ENCODE measurements at regions of chr4 and their contacts with region 1.

Region 1: GRCh38 chr4:110516106-110516922 is 40.4 kb downstream of the ENPEP start:
- DNase-seq: peak; percentile 60
- H3K4me3 Mint-ChIP-seq: peak overlapping the region; percentile 83
- H3K27ac Mint-ChIP-seq: peak overlapping the region; percentile 46
- H3K4me1 Mint-ChIP-seq: peaks cover 23% of the 10 kb centered on the region
- H3K27me3 Mint-ChIP-seq: peaks cover 10% of the 10 kb centered on the region

Region 2: GRCh38 chr4:109424093-109424841 is 1092.0 kb before region 1 on chr4:
- intact Hi-C with region 1: loop called (anchors 2 kb)
- DNase-seq: no peak
- H3K4me3 Mint-ChIP-seq: no peak overlapping the region
- H3K27ac Mint-ChIP-seq: no peak overlapping the region
- H3K4me1 Mint-ChIP-seq: peaks cover 9% of the 10 kb centered on the region
- H3K27me3 Mint-ChIP-seq: peaks cover 9% of the 10 kb centered on the region

Region 3: DNA sequence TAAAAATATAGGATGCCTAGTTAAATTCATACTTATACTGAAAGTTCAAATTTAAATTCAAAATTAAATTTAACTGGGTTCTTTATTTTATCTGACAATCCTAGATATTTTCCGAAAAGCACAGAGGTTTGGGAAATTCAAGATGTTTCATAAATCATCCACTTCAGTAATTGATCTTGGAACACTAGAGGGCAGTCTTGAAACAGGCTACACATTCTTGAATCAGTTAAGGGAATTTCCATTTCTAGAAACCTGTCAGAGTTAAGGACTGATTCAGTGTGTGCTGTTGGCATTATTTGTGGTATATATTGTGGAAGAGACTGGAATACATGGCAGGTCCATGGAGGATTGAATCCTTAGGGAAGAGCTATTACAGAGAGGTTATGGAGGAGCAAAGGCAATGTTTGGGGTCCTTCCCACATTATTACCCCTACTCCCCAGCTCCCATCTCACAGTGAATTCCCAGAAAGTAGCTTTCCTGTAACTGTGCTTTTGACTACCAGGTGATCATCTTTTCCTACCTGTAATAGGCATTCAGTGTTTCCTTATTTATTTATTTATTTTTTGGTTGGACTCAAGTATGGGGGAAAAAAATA is 510.8 kb before region 1 on chr4:
- intact Hi-C with region 1: loop called (anchors 1 kb)
- DNase-seq: no peak
- H3K4me3 Mint-ChIP-seq: no peak overlapping the region
- H3K27ac Mint-ChIP-seq: no peak overlapping the region
- H3K4me1 Mint-ChIP-seq: peaks cover 23% of the 10 kb centered on the region
- H3K27me3 Mint-ChIP-seq: peaks cover 2% of the 10 kb centered on the region

Region 4: DNA sequence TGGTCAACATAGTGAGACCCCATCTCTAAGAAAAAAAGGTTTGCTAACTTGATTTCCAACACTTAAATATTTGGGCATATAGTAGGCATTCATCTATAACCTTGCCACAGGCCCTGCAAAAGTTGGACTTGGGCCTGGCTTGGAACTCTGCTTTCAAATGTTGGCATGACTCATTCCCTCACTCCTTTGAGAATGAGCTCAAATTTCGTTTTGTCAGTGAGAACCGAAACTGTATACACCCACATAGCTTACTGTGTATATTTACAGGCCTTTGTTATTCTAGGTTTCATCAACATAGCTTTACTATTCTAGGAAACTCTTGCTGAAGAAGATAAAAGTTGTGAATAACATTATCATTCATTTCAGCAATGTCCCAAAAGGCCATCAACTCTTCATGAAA is 229.2 kb before region 1 on chr4:
- intact Hi-C with region 1: loop called (anchors 10 kb)
- DNase-seq: no peak
- H3K4me3 Mint-ChIP-seq: peak overlapping the region; percentile 31
- H3K27ac Mint-ChIP-seq: peak overlapping the region; percentile 74
- H3K4me1 Mint-ChIP-seq: peaks cover 15% of the 10 kb centered on the region
- H3K27me3 Mint-ChIP-seq: peaks cover 13% of the 10 kb centered on the region

Region 5: GRCh38 chr4:110344162-110344561 is 172.2 kb before region 1 on chr4:
- intact Hi-C with region 1: loop called (anchors 2 kb)
- DNase-seq: no peak
- H3K4me3 Mint-ChIP-seq: no peak overlapping the region
- H3K27ac Mint-ChIP-seq: no peak overlapping the region
- H3K4me1 Mint-ChIP-seq: peaks cover 7% of the 10 kb centered on the region
- H3K27me3 Mint-ChIP-seq: peaks cover 14% of the 10 kb centered on the region

Region 6: DNA sequence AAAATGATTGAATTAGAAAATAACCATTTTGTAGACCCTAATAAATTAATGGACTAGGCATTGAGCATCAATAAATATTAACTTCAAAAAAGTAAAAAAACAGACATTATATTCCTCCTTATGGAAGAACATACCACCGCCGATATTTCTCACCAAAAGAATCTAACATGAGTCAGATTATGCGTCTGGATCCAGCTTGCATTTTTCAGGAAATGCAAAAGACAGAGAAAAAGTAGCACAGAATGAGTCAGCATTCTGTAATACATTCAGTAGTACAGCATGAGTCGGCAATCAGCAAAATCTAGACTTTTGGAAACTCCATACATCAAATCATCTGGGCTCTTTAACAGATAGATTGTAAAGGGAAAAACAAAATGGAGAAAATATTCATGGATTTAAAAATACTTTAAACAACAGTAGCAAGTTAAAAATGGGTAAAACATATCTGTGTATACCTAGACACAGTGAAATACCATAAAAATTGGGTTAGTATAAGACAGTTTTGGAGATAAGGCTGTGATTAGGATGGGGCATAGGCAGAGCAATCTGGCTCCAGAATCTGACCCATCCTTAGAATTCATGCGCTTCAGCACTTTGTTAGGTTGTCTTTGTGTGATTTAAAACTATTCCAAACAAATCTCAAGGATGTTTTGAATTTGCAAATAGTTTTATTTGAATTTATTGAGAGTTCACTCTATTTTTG is 995.9 kb after region 1 on chr4:
- intact Hi-C with region 1: no loop called
- DNase-seq: no peak
- H3K4me3 Mint-ChIP-seq: no peak overlapping the region
- H3K27ac Mint-ChIP-seq: no peak overlapping the region
- H3K4me1 Mint-ChIP-seq: no peaks in the 10 kb centered on the region
- H3K27me3 Mint-ChIP-seq: peaks cover 4% of the 10 kb centered on the region